ENCODE measurements at regions of chr7 and their contacts with region 1.

Region 1: DNA sequence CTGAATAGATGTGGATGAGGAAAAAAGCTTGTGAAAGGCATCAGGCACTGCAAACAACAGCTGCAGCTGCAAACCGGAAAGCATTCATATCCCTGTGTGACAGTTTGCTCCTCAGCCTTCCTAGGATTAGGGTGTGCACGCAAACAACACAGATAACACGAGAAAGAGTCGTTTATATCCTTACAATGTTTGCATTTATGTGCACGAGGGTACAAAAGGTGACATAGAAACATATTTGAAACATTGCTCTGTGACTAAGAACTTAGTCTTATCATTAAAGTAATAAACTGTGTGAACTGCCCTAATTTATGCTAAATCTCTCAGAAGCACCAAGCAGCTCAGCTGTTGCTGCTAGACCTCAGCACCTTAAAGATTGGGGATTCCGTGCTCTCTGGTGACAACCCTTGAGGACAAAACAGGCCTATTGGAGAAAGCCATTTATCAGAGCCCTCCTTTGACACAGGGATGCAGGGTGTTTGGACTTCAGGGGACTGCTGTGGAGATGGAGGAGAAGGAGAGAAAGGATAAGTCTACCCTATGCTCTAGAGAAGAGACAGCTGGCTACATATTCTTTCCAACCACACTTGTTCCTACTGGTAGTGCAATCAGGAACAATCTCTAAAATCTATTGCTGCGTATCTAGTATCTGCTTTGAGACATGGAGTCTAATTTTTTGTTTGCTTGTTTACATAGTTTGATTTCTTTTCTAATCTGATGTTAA is 176.2 kb downstream of the GNAT3 start:
- DNase-seq: peak; percentile 36 to 70
- H3K4me3 ChIP-seq: no peak overlapping the region
- H3K4me3 Mint-ChIP-seq: peak overlapping the region; percentile 34
- H3K27ac Mint-ChIP-seq: no peak overlapping the region
- H3K4me1 ChIP-seq: no peaks in the 10 kb centered on the region; the same call in 1 of the 2 replicates
- H3K4me1 Mint-ChIP-seq: no peaks in the 10 kb centered on the region
- H3K27me3 ChIP-seq: no peaks in the 10 kb centered on the region
- H3K27me3 Mint-ChIP-seq: peaks cover 4% of the 10 kb centered on the region
- CTCF ChIP-seq: no peak

Region 2: DNA sequence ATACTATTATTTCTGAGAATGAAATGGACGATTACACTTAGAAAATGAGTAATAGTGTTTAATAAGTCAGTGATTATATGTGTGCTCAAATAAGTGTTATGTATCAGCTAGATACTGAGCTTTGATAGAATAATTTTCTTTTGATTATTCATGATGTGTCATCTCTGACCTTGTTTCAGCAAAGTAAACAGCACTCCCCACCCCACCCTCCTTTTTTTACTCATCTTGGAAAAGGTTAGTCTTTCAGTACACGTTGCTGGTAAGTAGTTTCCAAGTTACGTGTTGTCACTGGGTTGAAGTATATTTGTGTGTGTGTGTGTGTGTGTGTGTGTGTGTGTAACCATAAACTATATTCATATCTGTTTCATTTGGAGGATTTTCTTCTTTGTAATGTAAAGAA is 116.9 kb before region 1 on chr7:
- CTCF ChIA-PET with region 1: interaction called, 14 read pairs
- POLR2A ChIA-PET with region 1: no interaction called
- intact Hi-C with region 1: no loop called
- DNase-seq: no peak
- H3K4me3 ChIP-seq: no peak overlapping the region
- H3K4me3 Mint-ChIP-seq: no peak overlapping the region
- H3K27ac Mint-ChIP-seq: no peak overlapping the region
- H3K4me1 ChIP-seq: no peaks in the 10 kb centered on the region
- H3K4me1 Mint-ChIP-seq: no peaks in the 10 kb centered on the region
- H3K27me3 ChIP-seq: no peaks in the 10 kb centered on the region
- H3K27me3 Mint-ChIP-seq: no peaks in the 10 kb centered on the region
- CTCF ChIP-seq: no peak

Region 3: GRCh38 chr7:80379034-80379982 is 43.6 kb after region 1 on chr7:
- CTCF ChIA-PET with region 1: no interaction called
- POLR2A ChIA-PET with region 1: no interaction called
- intact Hi-C with region 1: no loop called
- DNase-seq: no peak
- H3K4me3 ChIP-seq: no peak overlapping the region
- H3K4me3 Mint-ChIP-seq: no peak overlapping the region
- H3K27ac Mint-ChIP-seq: no peak overlapping the region
- H3K4me1 ChIP-seq: no peaks in the 10 kb centered on the region
- H3K4me1 Mint-ChIP-seq: no peaks in the 10 kb centered on the region
- H3K27me3 ChIP-seq: no peaks in the 10 kb centered on the region
- H3K27me3 Mint-ChIP-seq: no peaks in the 10 kb centered on the region
- CTCF ChIP-seq: no peak